ENCODE measurements at regions of chr17 and their contacts with region 1.

Region 1: DNA sequence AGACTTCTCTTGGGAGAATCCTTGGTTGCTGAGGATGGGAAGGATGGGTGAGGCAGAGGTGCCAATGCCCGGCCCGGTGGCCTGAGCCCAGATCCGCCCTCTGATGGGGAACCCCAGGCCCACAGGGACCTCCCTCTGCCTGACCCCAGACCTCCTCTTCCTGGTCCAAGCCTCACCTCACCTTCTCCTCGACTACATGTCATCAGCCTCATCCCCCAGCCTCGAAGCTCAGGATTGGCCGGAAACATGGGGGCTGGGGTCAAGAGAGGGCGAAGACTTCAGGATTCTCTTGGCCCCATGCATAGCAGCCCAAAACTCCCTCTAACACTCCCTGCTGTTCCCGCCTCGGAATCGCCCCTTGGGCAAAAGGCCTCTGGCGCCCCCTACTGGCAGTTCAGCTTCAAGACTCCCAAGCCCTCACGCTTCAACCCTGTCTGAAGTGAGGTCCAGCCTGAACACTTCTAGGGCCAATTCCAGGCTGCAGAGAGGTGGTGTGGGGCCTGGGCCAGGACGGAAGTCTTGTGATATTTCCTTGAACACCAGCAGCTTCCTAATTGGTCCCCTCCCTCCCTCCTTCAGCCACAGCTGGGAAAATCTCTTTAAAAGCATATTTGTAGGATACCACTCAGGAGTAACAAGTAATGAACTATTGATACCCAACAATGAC is 47.2 kb downstream of the ARHGAP27 start:
- DNase-seq: peak; percentile 80 to 99 (median 92)
- ATAC-seq: peak; percentile 96 to 97 (median 96)
- H3K4me3 ChIP-seq: no peak overlapping the region
- H3K27ac ChIP-seq: peak overlapping the region in 2 of 4 donors; percentile 6 to 36
- H3K4me1 ChIP-seq: peaks cover 0 to 18% (median 0%) of the 10 kb centered on the region in 3 donors
- H3K27me3 ChIP-seq: no peaks in the 10 kb centered on the region
- CTCF ChIP-seq: peak; percentile 96 to 98 (median 97)

Region 2: DNA sequence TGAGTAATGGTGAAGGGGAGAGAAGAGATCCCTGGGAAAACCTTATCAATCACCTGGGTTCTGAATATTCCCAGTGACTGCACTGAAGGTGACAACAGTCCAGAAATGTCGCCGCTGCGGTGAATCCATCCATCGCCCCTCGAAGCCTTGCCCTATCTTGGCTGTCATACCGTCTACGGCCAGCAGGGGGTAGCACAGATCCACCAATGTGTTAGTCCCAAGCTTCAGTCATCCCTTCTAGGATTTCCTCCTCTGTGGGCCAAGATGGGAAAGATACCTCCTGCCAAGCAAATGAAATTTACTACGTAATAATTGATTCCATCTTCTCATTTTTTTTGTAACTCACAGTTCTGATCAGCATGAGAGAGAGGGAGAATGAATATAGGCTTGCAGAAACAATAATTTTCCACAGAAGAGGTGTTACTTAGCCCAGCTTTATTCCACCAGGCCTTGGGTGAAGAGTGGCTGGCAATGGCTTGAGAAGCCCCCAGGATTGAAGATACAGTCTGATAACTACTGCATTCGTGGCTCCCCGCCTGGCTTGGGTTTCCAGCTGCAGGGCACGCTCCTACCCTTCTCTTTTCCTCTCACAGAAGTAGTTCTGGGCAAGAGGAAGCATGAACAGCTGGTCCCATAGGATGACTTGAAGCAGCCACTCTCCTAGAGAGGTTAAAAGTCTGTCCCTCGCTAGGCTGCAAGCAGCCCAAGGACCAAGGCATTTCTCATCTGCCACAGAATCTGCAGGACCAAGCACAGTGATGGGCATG is 166.4 kb before region 1 on chr17:
- intact Hi-C with region 1: loop called in 2 of 3 experiments (anchors 5 kb)
- DNase-seq: peak; percentile 70 to 98 (median 88)
- ATAC-seq: peak; percentile 87 to 95 (median 92)
- H3K4me3 ChIP-seq: no peak overlapping the region
- H3K27ac ChIP-seq: no peak overlapping the region
- H3K4me1 ChIP-seq: peaks cover 0 to 5% (median 0%) of the 10 kb centered on the region in 3 donors
- H3K27me3 ChIP-seq: no peaks in the 10 kb centered on the region
- CTCF ChIP-seq: peak; percentile 84 to 95 (median 92)

Region 3: GRCh38 chr17:45277216-45277849 is 108.1 kb before region 1 on chr17:
- intact Hi-C with region 1: loop called in 2 of 3 experiments (anchors 2 to 5 kb)
- DNase-seq: peak; percentile 91 to 95 (median 95)
- ATAC-seq: peak; percentile 81 to 92 (median 86)
- H3K4me3 ChIP-seq: peak overlapping the region in 2 of 4 donors; percentile 8 to 13
- H3K27ac ChIP-seq: peak overlapping the region; percentile 41 to 80 (median 66)
- H3K4me1 ChIP-seq: peaks cover 10 to 19% (median 14%) of the 10 kb centered on the region in 3 donors
- H3K27me3 ChIP-seq: no peaks in the 10 kb centered on the region
- CTCF ChIP-seq: peak; percentile 69 to 74 (median 73)

Measured in pancreas (tissue), 10 donors.